CD4-positive, alpha-beta T cell (primary cell): ENCODE measurements at regions of chr14 and their contacts with region 1.

Region 1: DNA sequence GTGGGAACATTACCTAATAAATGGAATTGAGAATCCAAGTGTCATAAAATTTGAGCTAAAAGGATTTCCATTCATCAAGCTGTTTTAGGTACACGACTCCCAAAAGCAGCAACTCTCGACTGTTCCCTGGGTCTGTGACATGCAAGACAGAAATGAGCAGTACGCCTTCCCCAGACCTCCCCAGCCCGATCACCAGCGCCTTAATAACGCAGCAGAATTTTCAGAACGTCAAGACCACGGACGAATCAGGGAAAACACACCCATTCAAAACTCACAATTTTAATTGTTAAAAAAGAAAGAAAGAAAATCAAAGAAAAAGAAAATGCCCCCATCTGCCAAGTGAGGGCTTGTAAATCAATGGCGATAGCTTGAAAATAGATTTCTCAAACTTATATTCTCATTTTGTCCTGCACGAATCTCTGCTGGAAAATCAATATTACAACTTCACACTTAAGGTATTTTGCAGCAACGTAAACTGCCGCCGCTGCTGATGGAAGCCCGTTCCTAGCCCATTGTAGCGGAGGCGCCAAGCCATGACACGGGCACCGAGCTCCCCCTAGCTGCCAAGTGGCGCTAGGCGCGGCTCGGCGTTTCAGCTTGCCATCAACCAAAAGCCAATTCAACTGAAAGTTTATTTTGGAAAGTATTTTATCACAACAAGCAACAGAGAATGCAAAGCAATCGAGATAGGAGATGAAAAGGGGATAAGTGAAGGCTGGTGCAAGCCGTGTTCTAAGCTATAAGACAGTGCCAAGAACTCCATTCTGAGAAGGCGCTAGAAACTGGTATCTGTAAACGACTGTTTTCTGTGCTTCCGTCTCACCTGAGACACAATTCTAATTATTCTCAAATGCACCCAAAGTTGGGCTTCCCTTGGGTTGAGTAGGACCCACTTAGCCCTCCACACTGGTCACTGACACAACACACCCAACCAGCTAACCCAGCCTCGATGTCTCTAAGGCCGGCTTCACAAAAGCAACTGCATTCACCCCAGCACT is 5.5 kb downstream of the BCL11B start:
- DNase-seq: peak; percentile 83 to 94 (median 90)
- ATAC-seq: peak; percentile 22
- H3K4me3 ChIP-seq: peak overlapping the region; percentile 97
- H3K4me3 Mint-ChIP-seq: peak overlapping the region; percentile 100
- H3K27ac ChIP-seq: peak overlapping the region; percentile 95 to 97
- H3K27ac Mint-ChIP-seq: peak overlapping the region; percentile 99
- H3K4me1 ChIP-seq: peaks cover 53% of the 10 kb centered on the region
- H3K4me1 Mint-ChIP-seq: peaks cover 63% of the 10 kb centered on the region
- H3K27me3 ChIP-seq: no peaks in the 10 kb centered on the region
- H3K27me3 Mint-ChIP-seq: peaks cover 5% of the 10 kb centered on the region
- CTCF ChIP-seq: peak; percentile 99

Region 2: GRCh38 chr14:97994020-97994531 is 1272.4 kb before region 1 on chr14:
- CTCF ChIA-PET with region 1: no interaction called
- POLR2A ChIA-PET with region 1: interaction called, 10 read pairs
- intact Hi-C with region 1: loop called in 1 of 2 experiments (anchors 5 kb)
- DNase-seq: peak in 9 of 14 experiments; percentile 14 to 87 (median 50)
- ATAC-seq: peak; percentile 81
- H3K4me3 ChIP-seq: no peak overlapping the region
- H3K4me3 Mint-ChIP-seq: peak overlapping the region; percentile 43
- H3K27ac ChIP-seq: peak overlapping the region; percentile 68 to 75
- H3K27ac Mint-ChIP-seq: peak overlapping the region; percentile 93
- H3K4me1 ChIP-seq: peaks cover 51% of the 10 kb centered on the region
- H3K4me1 Mint-ChIP-seq: peaks cover 88% of the 10 kb centered on the region
- H3K27me3 ChIP-seq: no peaks in the 10 kb centered on the region
- H3K27me3 Mint-ChIP-seq: no peaks in the 10 kb centered on the region
- CTCF ChIP-seq: no peak

Region 3: DNA sequence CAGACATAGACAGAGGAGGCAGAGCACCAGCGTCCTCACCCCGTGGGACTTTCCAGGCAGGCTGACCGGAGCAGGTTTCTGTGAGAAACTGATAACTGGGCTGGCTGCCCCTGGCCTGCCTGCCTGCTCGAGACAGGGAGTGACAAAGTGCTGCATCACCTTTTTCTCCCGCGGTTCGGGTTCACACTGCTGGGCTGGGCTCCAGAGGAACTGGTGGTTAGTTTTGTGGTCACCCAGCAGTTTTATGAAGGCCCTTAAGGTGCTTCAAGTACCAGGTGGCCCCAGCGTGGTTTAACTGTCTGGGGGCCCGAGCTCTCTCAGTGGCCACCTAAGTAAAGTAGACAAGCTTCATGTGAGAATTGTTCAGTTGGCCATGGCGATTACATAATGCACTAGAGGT is 1068.1 kb before region 1 on chr14:
- CTCF ChIA-PET with region 1: no interaction called
- POLR2A ChIA-PET with region 1: interaction called, 271 read pairs
- intact Hi-C with region 1: loop called in 1 of 2 experiments (anchors 5 kb)
- DNase-seq: peak in 7 of 14 experiments; percentile 35 to 79 (median 61)
- ATAC-seq: peak; percentile 32
- H3K4me3 ChIP-seq: peak overlapping the region; percentile 22
- H3K4me3 Mint-ChIP-seq: peak overlapping the region; percentile 36
- H3K27ac ChIP-seq: peak overlapping the region; percentile 13 to 54
- H3K27ac Mint-ChIP-seq: peak overlapping the region; percentile 93
- H3K4me1 ChIP-seq: peaks cover 72% of the 10 kb centered on the region
- H3K4me1 Mint-ChIP-seq: peaks cover 96% of the 10 kb centered on the region
- H3K27me3 ChIP-seq: no peaks in the 10 kb centered on the region
- H3K27me3 Mint-ChIP-seq: no peaks in the 10 kb centered on the region
- CTCF ChIP-seq: no peak

Region 4: DNA sequence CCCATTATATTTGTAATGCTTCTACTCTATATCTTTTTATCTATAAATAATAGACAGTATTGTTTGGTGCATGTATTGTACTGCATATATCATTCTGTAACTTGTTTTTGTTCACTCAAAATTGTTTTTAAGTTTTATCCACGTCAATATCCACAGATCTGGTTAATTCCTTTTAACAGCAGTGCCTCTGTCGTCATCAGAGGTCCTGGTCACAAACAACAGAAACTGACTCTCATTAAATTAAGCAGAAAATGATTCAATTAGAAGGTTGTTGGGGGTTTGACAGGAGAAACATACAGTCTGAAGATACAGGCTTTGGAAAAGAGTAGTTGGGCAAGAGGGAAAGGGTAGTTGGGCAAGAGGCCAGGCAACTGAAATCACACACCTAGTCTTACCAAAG is 595.9 kb before region 1 on chr14:
- CTCF ChIA-PET with region 1: no interaction called
- POLR2A ChIA-PET with region 1: no interaction called
- intact Hi-C with region 1: no loop called
- DNase-seq: no peak
- ATAC-seq: no peak
- H3K4me3 ChIP-seq: no peak overlapping the region
- H3K4me3 Mint-ChIP-seq: no peak overlapping the region
- H3K27ac ChIP-seq: no peak overlapping the region
- H3K27ac Mint-ChIP-seq: no peak overlapping the region
- H3K4me1 ChIP-seq: no peaks in the 10 kb centered on the region
- H3K4me1 Mint-ChIP-seq: no peaks in the 10 kb centered on the region
- H3K27me3 ChIP-seq: no peaks in the 10 kb centered on the region
- H3K27me3 Mint-ChIP-seq: peaks cover 3% of the 10 kb centered on the region
- CTCF ChIP-seq: no peak

Region 5: DNA sequence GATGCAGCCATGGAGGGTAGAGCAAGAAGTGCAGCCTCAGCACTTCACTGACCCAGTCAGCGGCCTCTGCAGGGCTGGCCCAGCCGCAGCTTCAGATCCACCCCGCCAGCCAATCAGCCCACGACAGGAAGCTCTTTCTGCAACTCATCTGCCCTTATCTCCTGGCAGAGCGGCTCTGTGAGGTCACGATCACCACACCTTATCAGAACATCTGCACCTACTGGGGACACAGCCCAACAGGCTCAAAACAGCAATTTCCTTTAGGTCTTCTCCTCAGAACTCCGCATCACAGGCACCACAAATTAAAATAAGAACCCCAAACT is 281.8 kb before region 1 on chr14:
- CTCF ChIA-PET with region 1: no interaction called
- POLR2A ChIA-PET with region 1: interaction called, 6 read pairs
- intact Hi-C with region 1: loop called in 1 of 2 experiments (anchors 10 kb)
- DNase-seq: peak; percentile 49 to 92 (median 66)
- ATAC-seq: peak; percentile 86
- H3K4me3 ChIP-seq: peak overlapping the region; percentile 28
- H3K4me3 Mint-ChIP-seq: peak overlapping the region; percentile 81
- H3K27ac ChIP-seq: peak overlapping the region; percentile 31 to 77
- H3K27ac Mint-ChIP-seq: peak overlapping the region; percentile 89
- H3K4me1 ChIP-seq: peaks cover 32% of the 10 kb centered on the region
- H3K4me1 Mint-ChIP-seq: peaks cover 54% of the 10 kb centered on the region
- H3K27me3 ChIP-seq: no peaks in the 10 kb centered on the region
- H3K27me3 Mint-ChIP-seq: no peaks in the 10 kb centered on the region
- CTCF ChIP-seq: no peak

Region 6: GRCh38 chr14:99221445-99221844 is 45.0 kb before region 1 on chr14:
- CTCF ChIA-PET with region 1: interaction called, 179 read pairs
- POLR2A ChIA-PET with region 1: interaction called, 4,389 read pairs
- intact Hi-C with region 1: no loop called
- DNase-seq: no peak
- ATAC-seq: no peak
- H3K4me3 ChIP-seq: no peak overlapping the region
- H3K4me3 Mint-ChIP-seq: peak overlapping the region; percentile 65
- H3K27ac ChIP-seq: peak overlapping the region; percentile 28 to 60
- H3K27ac Mint-ChIP-seq: peak overlapping the region; percentile 95
- H3K4me1 ChIP-seq: peaks cover 96% of the 10 kb centered on the region
- H3K4me1 Mint-ChIP-seq: peaks cover 96% of the 10 kb centered on the region
- H3K27me3 ChIP-seq: no peaks in the 10 kb centered on the region
- H3K27me3 Mint-ChIP-seq: no peaks in the 10 kb centered on the region
- CTCF ChIP-seq: no peak

Region 7: DNA sequence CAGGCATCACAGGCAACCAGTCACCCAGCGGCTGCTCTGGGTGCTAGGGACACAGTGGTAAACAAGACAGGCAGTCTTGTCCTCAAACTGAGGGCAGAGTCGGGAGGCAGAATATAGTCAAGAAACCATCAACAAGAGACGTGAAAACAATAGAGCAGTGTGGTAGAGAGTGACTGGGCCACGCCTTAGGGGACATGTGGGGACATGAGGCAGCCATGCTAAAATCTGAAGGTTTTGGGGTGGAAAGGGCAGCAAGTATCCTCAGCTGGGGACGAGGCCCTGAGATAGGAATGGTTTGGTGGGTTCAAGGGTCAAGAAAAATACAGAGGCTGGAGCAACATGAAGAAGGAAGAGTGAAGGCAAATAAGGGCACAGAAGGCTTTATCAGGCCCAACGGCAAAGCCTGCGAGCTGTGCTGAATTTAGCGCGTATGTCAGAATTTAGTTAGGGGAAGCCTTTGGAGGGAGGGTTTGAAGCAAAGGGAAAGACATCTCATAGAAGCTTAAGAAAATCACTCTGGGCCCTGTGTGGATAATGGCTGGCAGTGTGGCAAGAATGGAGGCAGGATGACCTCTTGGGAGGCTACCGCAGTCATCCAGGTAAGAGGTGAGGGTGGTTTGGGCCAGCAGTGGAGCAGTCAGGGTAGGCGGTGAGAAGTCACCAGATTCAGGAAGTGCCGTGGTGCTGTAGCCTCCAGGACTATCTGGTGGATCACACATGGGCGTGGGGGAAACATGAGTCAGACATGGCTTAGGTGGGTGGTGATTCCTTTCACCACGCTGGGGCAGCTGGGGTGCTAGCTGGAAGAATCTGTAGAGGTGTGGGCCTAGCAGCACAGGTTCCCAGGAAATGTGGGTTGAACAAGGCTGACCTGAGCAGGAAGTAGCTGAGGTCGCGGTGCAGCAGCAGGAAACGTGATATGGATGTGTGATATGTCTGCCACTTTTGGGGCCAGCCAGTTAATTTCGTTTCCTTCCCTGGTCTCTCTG is 801.8 kb after region 1 on chr14:
- CTCF ChIA-PET with region 1: no interaction called
- POLR2A ChIA-PET with region 1: no interaction called
- intact Hi-C with region 1: loop called in 1 of 2 experiments (anchors 5 kb)
- DNase-seq: peak; percentile 68 to 97 (median 82)
- ATAC-seq: peak; percentile 49
- H3K4me3 ChIP-seq: peak overlapping the region; percentile 77
- H3K4me3 Mint-ChIP-seq: peak overlapping the region; percentile 95
- H3K27ac ChIP-seq: peak overlapping the region; percentile 82 to 96
- H3K27ac Mint-ChIP-seq: peak overlapping the region; percentile 98
- H3K4me1 ChIP-seq: peaks cover 67% of the 10 kb centered on the region
- H3K4me1 Mint-ChIP-seq: peaks cover 85% of the 10 kb centered on the region
- H3K27me3 ChIP-seq: no peaks in the 10 kb centered on the region
- H3K27me3 Mint-ChIP-seq: no peaks in the 10 kb centered on the region
- CTCF ChIP-seq: no peak